ENCODE measurements at regions of chr7 and their contacts with region 1.

Region 1: GRCh38 chr7:151008511-151009323 is 15.6 kb downstream of the ATG9B start:
- DNase-seq: no peak
- H3K4me3 ChIP-seq: no peak overlapping the region
- H3K27ac ChIP-seq: no peak overlapping the region
- H3K4me1 ChIP-seq: peaks cover 0 to 22% (median 9%) of the 10 kb centered on the region in 4 donors
- H3K27me3 ChIP-seq: peaks cover 0 to 63% of the 10 kb centered on the region in 2 donors
- CTCF ChIP-seq: peak; percentile 45 to 61

Region 2: DNA sequence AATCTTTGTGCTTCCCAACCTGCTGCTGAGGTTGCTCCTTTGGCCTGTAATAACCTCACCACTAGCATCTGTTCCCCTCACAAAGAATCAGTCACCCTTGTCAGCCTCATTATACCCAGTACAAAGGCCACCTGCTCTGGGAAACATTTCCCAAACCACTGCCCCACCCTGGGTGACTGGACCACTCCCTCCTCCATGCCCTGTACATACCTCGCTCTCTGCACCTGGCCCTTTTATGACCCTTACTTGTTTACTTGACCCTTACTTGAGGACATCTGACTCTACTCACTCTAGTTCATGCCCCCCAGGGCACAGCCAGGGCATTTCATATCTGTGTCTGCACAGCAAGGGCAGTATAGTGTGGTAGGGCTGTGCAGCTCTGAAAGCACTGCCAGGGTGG is 177.8 kb before region 1 on chr7:
- intact Hi-C with region 1: no loop called
- DNase-seq: no peak
- H3K4me3 ChIP-seq: no peak overlapping the region
- H3K27ac ChIP-seq: no peak overlapping the region
- H3K4me1 ChIP-seq: no peaks in the 10 kb centered on the region
- H3K27me3 ChIP-seq: no peaks in the 10 kb centered on the region
- CTCF ChIP-seq: no peak

Region 3: DNA sequence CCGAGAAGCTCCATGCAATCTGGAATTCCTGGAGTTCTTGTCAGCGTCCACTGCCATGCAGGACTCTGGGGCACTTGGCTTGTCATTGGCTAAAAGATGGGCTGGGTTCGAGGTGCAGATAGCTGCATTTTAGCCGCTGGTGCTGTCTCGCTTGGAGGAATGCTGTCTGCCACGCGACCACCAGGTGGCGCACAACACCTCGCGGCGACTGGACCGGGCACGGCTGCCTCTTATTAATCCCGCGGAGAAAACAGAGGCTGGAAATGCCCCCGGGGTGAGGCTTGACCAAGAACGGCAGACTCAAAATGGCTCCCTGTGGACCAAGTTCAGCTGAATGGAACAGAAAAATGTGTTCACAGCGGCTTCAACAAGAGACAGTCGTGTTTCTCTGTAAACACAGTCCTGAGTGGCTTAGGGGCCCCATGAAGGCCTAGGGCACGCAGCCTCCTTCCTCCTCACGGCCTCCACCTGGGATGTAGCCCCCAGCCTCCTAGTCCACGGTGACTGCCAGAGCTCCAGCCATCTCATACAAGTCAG is 110.2 kb before region 1 on chr7:
- intact Hi-C with region 1: loop called (anchors 5 kb)
- DNase-seq: peak; percentile 62 to 81
- H3K4me3 ChIP-seq: no peak overlapping the region
- H3K27ac ChIP-seq: no peak overlapping the region
- H3K4me1 ChIP-seq: peaks cover 0 to 8% (median 2%) of the 10 kb centered on the region in 4 donors
- H3K27me3 ChIP-seq: peaks cover 0 to 27% of the 10 kb centered on the region in 2 donors
- CTCF ChIP-seq: peak; percentile 87 to 90

Measured in tibial artery (tissue), 4 donors.